Lower leg skin (tissue), 4 donors: ENCODE measurements at regions of chr4 and their contacts with region 1.

Region 1: DNA sequence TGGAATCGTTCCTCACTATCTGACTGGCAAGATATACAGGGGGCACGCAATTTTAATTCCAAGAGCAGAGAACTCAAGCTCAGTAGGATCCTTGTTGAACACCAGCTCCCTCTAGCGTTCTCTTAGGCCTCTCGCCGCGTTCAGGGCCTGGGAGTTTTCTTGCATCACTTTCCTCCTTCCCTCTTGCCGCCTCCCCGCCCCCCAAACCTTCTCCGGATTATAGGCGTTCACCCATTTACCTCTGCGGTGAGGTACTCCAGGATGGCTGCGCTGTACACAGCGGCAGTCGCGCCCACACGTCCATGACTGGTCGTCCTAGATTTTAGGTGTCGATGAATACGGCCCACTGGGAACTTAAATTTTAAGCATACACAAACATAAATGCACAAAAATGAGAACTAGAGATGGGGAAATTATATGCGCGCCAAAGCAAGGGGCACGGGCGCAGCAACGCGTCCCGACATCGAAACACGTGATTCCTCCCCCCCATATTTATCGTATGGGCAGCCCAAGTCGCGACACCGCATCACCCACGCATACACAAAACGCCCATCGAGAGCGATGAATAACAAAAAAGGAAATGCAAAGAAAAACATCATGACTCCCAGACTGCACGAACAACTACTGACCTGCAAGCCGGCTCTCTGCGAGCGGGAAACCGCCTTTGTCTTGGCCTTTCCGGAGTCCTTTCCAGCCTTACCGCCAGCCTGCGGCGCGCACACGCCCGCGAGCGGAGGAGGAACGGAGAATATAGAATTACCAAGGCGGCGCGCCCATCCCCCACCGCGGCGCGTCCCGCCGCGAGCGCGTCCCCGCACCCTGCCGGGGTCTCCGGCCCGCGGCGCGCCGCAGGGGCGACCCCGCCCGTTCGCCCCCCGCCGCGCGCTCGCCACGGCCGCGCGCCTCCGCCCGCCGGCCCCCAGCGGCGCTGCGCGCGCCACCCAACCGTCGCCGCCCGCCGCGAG is 759 bp downstream of the H2AZ1 start:
- DNase-seq: peak; percentile 91 to 98
- H3K4me3 ChIP-seq: peak overlapping the region; percentile 65
- CTCF ChIP-seq: peak in 1 of 3 donors; percentile 78
- POLR2A ChIP-seq: no peak

Region 2: GRCh38 chr4:99563310-99564186 is 385.8 kb before region 1 on chr4 and contains the start of gene TRMT10A:
- intact Hi-C with region 1: loop called (anchors 5 kb)
- DNase-seq: peak; percentile 96 to 99
- H3K4me3 ChIP-seq: peak within 1 kb of the TSS; percentile 31
- CTCF ChIP-seq: no peak
- POLR2A ChIP-seq: no peak
- total RNA-seq, gene TRMT10A: 1.3 to 9.0 (median 4.7) TPM

Region 3: GRCh38 chr4:99894161-99894997 is 54.9 kb before region 1 on chr4 and contains the start of gene LAMTOR3:
- intact Hi-C with region 1: loop called (anchors 10 kb)
- DNase-seq: peak; percentile 91 to 97
- H3K4me3 ChIP-seq: peak within 1 kb of the TSS; percentile 99
- CTCF ChIP-seq: no peak
- POLR2A ChIP-seq: no peak
- total RNA-seq, gene LAMTOR3: 33.6 to 51.2 (median 41.2) TPM